MCF 10A (cell line): ENCODE measurements at regions of chr1 and their contacts with region 1.

Region 1: GRCh38 chr1:207963427-207964194 is 52.7 kb upstream of the CD34 start:
- DNase-seq: peak; percentile 95
- H3K4me3 Mint-ChIP-seq: peak overlapping the region; percentile 69
- H3K27ac Mint-ChIP-seq: peak overlapping the region; percentile 57
- H3K4me1 Mint-ChIP-seq: peaks cover 27% of the 10 kb centered on the region
- H3K27me3 Mint-ChIP-seq: no peaks in the 10 kb centered on the region
- CTCF ChIP-seq: peak; percentile 100

Region 2: GRCh38 chr1:207628776-207629175 is 334.8 kb before region 1 on chr1:
- CTCF ChIA-PET with region 1: no interaction called
- POLR2A ChIA-PET with region 1: no interaction called
- intact Hi-C with region 1: no loop called
- DNase-seq: no peak
- H3K4me3 Mint-ChIP-seq: no peak overlapping the region
- H3K27ac Mint-ChIP-seq: no peak overlapping the region
- H3K4me1 Mint-ChIP-seq: no peaks in the 10 kb centered on the region
- H3K27me3 Mint-ChIP-seq: peaks cover 5% of the 10 kb centered on the region
- CTCF ChIP-seq: no peak

Region 3: DNA sequence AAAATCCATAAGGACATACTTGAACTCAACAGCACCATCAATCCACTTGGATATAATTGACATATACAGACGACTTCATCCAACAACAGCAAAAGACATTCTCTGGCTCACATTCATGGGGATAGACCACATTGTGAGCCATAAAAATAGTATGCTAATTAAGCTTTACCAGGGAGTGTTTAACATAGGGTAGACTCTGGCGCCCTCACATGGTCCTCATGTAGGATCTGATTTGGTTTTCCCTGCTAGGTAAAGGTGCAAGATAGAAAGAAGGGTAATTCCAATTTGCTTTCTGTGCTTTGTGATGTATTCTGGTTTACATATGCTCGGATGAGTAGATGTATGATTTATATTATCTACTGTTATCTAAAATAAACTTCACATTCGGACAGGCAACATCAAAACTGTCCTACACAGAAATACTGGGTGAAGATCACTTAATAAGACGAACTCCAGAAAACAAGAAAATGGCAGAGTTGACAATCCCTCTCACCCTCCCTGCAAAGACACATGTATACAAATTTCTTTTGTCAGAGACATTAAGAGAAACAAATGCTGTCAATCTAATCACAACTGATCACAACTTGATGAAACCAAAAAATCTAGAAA is 291.0 kb before region 1 on chr1:
- CTCF ChIA-PET with region 1: no interaction called
- POLR2A ChIA-PET with region 1: no interaction called
- intact Hi-C with region 1: no loop called
- DNase-seq: peak; percentile 86
- H3K4me3 Mint-ChIP-seq: no peak overlapping the region
- H3K27ac Mint-ChIP-seq: no peak overlapping the region
- H3K4me1 Mint-ChIP-seq: peaks cover 12% of the 10 kb centered on the region
- H3K27me3 Mint-ChIP-seq: peaks cover 75% of the 10 kb centered on the region
- CTCF ChIP-seq: peak; percentile 90

Region 4: GRCh38 chr1:207805841-207806421 is 157.7 kb before region 1 on chr1:
- CTCF ChIA-PET with region 1: interaction called, 12 read pairs
- POLR2A ChIA-PET with region 1: interaction called, 4 read pairs
- intact Hi-C with region 1: no loop called
- DNase-seq: peak; percentile 100
- H3K4me3 Mint-ChIP-seq: peak overlapping the region; percentile 21
- H3K27ac Mint-ChIP-seq: peak overlapping the region; percentile 95
- H3K4me1 Mint-ChIP-seq: peaks cover 58% of the 10 kb centered on the region
- H3K27me3 Mint-ChIP-seq: no peaks in the 10 kb centered on the region
- CTCF ChIP-seq: no peak

Region 5: GRCh38 chr1:207868774-207869721 is 94.6 kb before region 1 on chr1:
- CTCF ChIA-PET with region 1: interaction called, 58 read pairs
- POLR2A ChIA-PET with region 1: interaction called, 28 read pairs
- intact Hi-C with region 1: no loop called
- DNase-seq: peak; percentile 89
- H3K4me3 Mint-ChIP-seq: peak overlapping the region; percentile 84
- H3K27ac Mint-ChIP-seq: peak overlapping the region; percentile 32
- H3K4me1 Mint-ChIP-seq: peaks cover 29% of the 10 kb centered on the region
- H3K27me3 Mint-ChIP-seq: no peaks in the 10 kb centered on the region
- CTCF ChIP-seq: peak; percentile 99

Region 6: DNA sequence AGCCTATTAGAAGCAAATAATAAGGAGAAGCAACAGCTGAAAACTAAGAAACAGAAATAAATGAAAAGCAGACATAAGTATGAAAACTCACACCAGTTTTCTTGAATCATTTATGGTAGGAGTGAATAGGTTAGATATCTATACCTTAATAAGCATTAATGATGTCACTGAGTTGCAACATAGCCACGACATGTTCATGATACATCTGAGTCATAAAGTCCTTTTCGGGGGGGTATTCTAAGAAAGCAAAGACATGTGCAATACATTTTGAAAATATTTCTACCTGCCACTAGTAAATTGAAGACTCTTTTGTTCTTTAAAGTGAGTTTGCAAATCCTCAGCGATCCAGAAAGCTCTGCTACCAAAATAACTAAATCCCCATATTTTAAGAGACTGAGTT is 59.8 kb before region 1 on chr1:
- CTCF ChIA-PET with region 1: interaction called, 118 read pairs
- POLR2A ChIA-PET with region 1: interaction called, 15 read pairs
- intact Hi-C with region 1: no loop called
- DNase-seq: peak; percentile 78
- H3K4me3 Mint-ChIP-seq: no peak overlapping the region
- H3K27ac Mint-ChIP-seq: peak overlapping the region; percentile 13
- H3K4me1 Mint-ChIP-seq: peaks cover 15% of the 10 kb centered on the region
- H3K27me3 Mint-ChIP-seq: no peaks in the 10 kb centered on the region
- CTCF ChIP-seq: no peak

Region 7: GRCh38 chr1:207935166-207935583 is 28.4 kb before region 1 on chr1:
- CTCF ChIA-PET with region 1: interaction called, 21 read pairs
- POLR2A ChIA-PET with region 1: interaction called, 5 read pairs
- intact Hi-C with region 1: no loop called
- DNase-seq: no peak
- H3K4me3 Mint-ChIP-seq: no peak overlapping the region
- H3K27ac Mint-ChIP-seq: no peak overlapping the region
- H3K4me1 Mint-ChIP-seq: peaks cover 6% of the 10 kb centered on the region
- H3K27me3 Mint-ChIP-seq: no peaks in the 10 kb centered on the region
- CTCF ChIP-seq: no peak

Region 8: GRCh38 chr1:207973898-207974568 is 10.4 kb after region 1 on chr1:
- CTCF ChIA-PET with region 1: interaction called, 44 read pairs
- POLR2A ChIA-PET with region 1: interaction called, 19 read pairs
- intact Hi-C with region 1: no loop called
- DNase-seq: no peak
- H3K4me3 Mint-ChIP-seq: no peak overlapping the region
- H3K27ac Mint-ChIP-seq: no peak overlapping the region
- H3K4me1 Mint-ChIP-seq: no peaks in the 10 kb centered on the region
- H3K27me3 Mint-ChIP-seq: peaks cover 42% of the 10 kb centered on the region
- CTCF ChIP-seq: no peak